Sigmoid colon (tissue), 7 donors: ENCODE measurements at regions of chr19 and their contacts with region 1.

Region 1: GRCh38 chr19:4732680-4733114 is 9.1 kb upstream of the DPP9 start:
- DNase-seq: peak; percentile 81
- H3K4me3 ChIP-seq: no peak overlapping the region
- H3K27ac ChIP-seq: no peak overlapping the region
- H3K4me1 ChIP-seq: peaks cover 0 to 8% (median 3%) of the 10 kb centered on the region in 4 donors
- H3K27me3 ChIP-seq: peaks cover 0 to 4% (median 0%) of the 10 kb centered on the region in 3 donors
- CTCF ChIP-seq: peak; percentile 62 to 75 (median 66)
- EP300 ChIP-seq: no peak
- POLR2A ChIP-seq: no peak

Region 2: GRCh38 chr19:4791170-4792018 is 58.7 kb after region 1 on chr19 and contains the start of gene FEM1A:
- intact Hi-C with region 1: loop called (anchors 1 kb)
- DNase-seq: peak; percentile 100
- H3K4me3 ChIP-seq: peak within 1 kb of the TSS; percentile 91 to 99 (median 96)
- H3K27ac ChIP-seq: peak within 1 kb of the TSS; percentile 94 to 97 (median 96)
- H3K4me1 ChIP-seq: peaks cover 0 to 45% (median 34%) of the 10 kb centered on the region in 4 donors
- H3K27me3 ChIP-seq: no peaks in the 10 kb centered on the region
- CTCF ChIP-seq: peak; percentile 91 to 99 (median 98)
- EP300 ChIP-seq: peak in 2 of 4 donors; percentile 60 to 64
- POLR2A ChIP-seq: peak; percentile 67 to 83
- total RNA-seq, gene FEM1A: 10.2 to 12.9 (median 11.8) TPM